ENCODE measurements at regions of chr15 and their contacts with region 1.

Region 1: DNA sequence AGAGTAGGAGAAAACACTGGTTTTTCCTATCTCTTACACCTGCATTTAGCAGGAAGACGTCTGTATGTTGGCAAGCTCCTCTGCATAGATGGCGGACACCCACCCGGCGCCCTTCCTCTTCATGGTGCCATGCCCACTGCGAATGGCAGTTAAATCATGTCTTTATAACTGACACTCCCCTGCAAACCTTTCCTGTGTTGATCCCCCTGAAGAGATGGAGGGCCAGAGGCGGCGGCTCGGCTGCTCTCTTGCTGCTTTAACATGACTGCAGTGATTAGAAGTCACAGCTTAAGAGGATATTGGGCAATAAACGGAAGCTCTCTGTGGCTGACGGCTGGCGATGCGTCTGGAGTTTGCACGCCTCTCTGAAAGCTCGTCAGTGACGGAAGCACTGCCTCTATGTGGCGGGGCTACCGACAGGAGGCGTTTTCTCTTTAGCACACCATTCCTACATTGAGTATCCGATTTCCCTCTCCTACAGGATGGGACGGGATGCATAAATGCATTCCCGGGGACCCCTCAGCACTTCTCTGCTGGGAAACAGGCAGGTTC is 25.5 kb upstream of the SNRPA1 start:
- DNase-seq: peak; percentile 87
- ATAC-seq: peak; percentile 99
- H3K4me3 Mint-ChIP-seq: peak overlapping the region; percentile 81
- H3K27ac Mint-ChIP-seq: peak overlapping the region; percentile 91
- H3K4me1 Mint-ChIP-seq: peaks cover 14% of the 10 kb centered on the region
- H3K27me3 Mint-ChIP-seq: no peaks in the 10 kb centered on the region
- CTCF ChIP-seq: peak; percentile 82

Region 2: DNA sequence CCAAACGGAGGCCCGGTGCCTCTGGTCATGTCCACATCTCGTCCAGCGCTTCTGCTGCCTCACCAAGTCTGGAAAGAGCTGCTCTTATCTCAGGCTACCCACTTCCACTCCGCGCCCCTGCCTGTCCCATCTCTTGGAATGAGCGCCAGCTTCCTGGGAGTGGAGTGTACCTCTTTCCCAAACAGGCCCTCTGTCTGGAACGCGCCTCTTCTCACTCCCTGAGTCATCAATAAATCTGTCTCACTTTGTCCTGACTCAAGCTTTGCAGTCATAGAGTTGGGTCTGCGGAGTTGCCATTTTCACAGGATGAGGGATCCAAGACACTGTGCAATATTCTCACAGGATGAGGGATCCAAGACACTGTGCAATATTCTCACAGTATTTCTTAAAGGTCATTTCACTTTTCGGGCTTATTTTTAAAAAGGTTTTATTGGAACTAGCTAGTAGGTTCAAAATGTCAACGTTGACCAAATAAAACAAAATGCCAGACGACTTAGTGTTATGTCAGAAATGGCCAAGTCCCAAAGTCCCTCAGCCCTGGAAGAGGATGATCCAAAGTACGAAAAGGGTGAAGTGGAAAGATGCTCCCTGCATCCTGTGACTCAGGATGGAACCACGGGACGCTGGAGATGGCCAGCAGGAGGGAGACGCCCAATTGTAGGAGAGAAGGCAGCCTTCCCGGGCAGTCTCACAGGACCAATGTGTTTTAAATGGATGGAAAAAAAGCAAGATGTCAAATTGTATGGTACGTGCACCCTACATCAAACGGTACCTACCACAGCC is 149.8 kb before region 1 on chr15:
- CTCF ChIA-PET with region 1: no interaction called
- POLR2A ChIA-PET with region 1: no interaction called
- intact Hi-C with region 1: no loop called
- DNase-seq: no peak
- ATAC-seq: no peak
- H3K4me3 Mint-ChIP-seq: no peak overlapping the region
- H3K27ac Mint-ChIP-seq: no peak overlapping the region
- H3K4me1 Mint-ChIP-seq: peaks cover 32% of the 10 kb centered on the region
- H3K27me3 Mint-ChIP-seq: no peaks in the 10 kb centered on the region
- CTCF ChIP-seq: no peak

Region 3: DNA sequence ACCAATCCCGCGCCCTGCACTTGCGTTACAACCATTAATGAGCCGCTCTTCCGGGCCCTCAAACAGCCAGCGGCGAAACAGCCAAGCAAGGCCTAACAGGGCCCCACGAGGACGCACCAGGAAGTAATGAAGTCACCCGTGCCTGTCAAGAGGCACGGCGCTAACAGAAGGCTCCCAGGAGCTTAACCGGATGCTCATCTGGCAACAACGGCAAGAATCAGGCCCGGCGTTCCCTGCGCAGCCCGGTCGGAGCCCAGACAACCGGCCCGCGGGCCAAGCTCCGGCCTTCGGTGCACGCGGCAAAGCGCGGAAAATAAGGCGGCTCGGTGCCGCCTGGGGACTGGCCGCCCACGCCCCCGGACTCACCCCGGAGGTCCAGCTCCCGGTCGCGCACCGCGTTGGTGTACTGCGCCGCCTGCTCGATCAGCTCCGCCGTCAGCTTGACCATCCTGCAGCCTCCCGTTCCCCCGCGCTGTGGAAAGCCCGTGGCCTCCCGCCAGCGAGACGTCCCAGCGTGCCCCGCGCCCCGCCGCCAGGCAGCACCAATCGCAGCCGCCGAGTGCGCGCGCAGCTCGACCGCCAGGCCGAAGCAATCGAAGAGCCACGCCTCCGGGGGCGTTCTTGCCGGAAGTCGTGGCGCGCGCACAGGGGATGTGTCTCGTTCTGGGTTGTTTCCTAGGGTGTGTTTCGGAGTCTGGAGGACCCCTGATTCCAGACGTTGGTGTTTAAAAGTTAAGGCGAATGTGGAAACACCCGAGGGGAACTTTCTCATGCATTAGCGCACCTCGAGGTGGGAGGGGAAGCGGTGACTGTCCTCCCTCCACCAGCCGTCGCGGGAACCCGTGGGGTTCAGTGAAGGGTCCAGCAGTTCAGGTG is 25.6 kb before region 1 on chr15 and contains the start of gene SNRPA1:
- CTCF ChIA-PET with region 1: interaction called, 50 read pairs
- POLR2A ChIA-PET with region 1: interaction called, 13 read pairs
- intact Hi-C with region 1: no loop called
- DNase-seq: peak; percentile 98
- ATAC-seq: peak; percentile 84
- H3K4me3 Mint-ChIP-seq: peak within 1 kb of the TSS; percentile 80
- H3K27ac Mint-ChIP-seq: peak within 1 kb of the TSS; percentile 95
- H3K4me1 Mint-ChIP-seq: peaks cover 42% of the 10 kb centered on the region
- H3K27me3 Mint-ChIP-seq: no peaks in the 10 kb centered on the region
- CTCF ChIP-seq: no peak
- total RNA-seq, gene SNRPA1: 243 to 249 TPM

Region 4: DNA sequence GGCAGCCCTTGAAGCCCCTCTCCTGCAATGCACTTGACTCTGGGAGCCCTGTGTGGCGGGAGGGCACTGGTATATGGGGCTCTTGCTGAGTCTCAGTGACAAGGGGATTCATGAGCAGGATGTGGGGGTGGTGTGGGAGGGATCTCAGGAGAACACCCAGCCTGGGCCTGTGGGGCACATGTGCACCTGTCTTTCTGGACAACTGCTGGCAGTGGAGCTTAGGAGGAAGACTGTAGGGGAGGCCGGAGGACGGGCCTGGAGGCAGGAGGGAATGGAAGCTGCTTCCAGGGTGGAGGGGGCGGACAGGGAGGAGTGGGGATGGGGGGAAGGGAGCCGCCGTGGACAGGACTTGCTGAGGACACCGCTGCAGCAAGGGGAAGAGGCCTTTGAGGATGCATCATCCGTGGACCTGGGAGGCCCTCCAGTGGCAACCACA is 14.7 kb before region 1 on chr15:
- CTCF ChIA-PET with region 1: interaction called, 50 read pairs
- POLR2A ChIA-PET with region 1: interaction called, 5 read pairs
- intact Hi-C with region 1: no loop called
- DNase-seq: no peak
- ATAC-seq: no peak
- H3K4me3 Mint-ChIP-seq: no peak overlapping the region
- H3K27ac Mint-ChIP-seq: no peak overlapping the region
- H3K4me1 Mint-ChIP-seq: no peaks in the 10 kb centered on the region
- H3K27me3 Mint-ChIP-seq: no peaks in the 10 kb centered on the region
- CTCF ChIP-seq: no peak

Region 5: GRCh38 chr15:101333401-101333800 is 12.8 kb after region 1 on chr15:
- CTCF ChIA-PET with region 1: interaction called, 46 read pairs
- POLR2A ChIA-PET with region 1: interaction called, 6 read pairs
- intact Hi-C with region 1: no loop called
- DNase-seq: peak; percentile 10
- ATAC-seq: no peak
- H3K4me3 Mint-ChIP-seq: no peak overlapping the region
- H3K27ac Mint-ChIP-seq: peak overlapping the region; percentile 96
- H3K4me1 Mint-ChIP-seq: peaks cover 12% of the 10 kb centered on the region
- H3K27me3 Mint-ChIP-seq: no peaks in the 10 kb centered on the region
- CTCF ChIP-seq: no peak

Region 6: GRCh38 chr15:101501703-101502373 is 181.3 kb after region 1 on chr15:
- CTCF ChIA-PET with region 1: interaction called, 21 read pairs
- POLR2A ChIA-PET with region 1: no interaction called
- intact Hi-C with region 1: loop called (anchors 10 kb)
- DNase-seq: peak; percentile 79
- ATAC-seq: peak; percentile 93
- H3K4me3 Mint-ChIP-seq: peak overlapping the region; percentile 39
- H3K27ac Mint-ChIP-seq: peak overlapping the region; percentile 11
- H3K4me1 Mint-ChIP-seq: peaks cover 18% of the 10 kb centered on the region
- H3K27me3 Mint-ChIP-seq: peaks cover 19% of the 10 kb centered on the region
- CTCF ChIP-seq: peak; percentile 78